HEK293 (cell line): ENCODE measurements at regions of chr5 and their contacts with region 1.

Region 1: DNA sequence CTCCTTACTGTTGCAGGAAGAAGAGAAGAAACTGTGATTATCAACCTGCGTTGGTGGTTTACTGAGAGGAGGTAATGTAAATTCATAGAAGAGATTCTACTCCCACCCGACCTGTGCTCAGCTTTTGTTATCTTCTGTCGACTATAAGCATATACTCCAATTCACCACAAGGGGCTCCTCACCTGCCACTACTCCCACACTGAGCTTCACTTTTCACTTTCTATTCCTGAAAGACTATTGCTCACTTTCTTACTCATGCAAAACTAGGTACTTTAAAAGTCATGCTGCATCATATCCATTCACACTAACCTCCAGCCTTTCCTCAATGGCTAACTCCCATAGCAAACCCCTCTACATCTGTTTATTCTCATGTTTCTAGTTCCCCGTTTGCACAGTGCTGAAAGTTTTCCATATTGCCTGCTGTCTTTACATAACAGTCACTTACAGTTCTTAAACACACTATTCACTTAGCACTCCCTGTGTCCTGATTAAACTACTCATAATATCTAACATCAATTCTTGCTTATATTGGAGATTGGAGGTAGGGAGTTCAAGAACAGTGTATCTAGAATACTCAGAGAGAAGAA is 1062.6 kb downstream of the NR2F1-AS1 start:
- H3K4me3 ChIP-seq: no peak overlapping the region
- H3K27ac ChIP-seq: no peak overlapping the region; the same call in 1 of the 2 replicates
- H3K4me1 ChIP-seq: peaks cover 10% of the 10 kb centered on the region
- CTCF ChIP-seq: no peak; the same call in 1 of the 2 replicates

Region 2: DNA sequence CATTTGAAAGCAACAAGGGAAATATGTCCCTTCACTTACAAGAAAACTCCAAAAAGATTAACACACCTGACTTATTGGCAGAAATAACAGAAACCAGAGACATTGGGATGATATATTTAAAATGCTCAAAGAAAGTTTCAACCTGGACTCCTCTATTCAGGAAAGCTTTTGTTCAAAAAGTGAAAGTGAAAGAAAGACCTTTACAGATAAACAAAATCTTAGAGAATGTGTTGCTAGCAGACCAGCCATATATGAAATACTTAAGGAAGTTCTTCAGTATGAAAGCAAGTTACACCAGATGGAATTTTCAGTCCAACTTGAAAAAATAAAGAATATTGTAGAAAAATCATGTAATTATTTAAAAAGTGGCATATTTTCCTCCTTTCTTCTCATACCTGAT is 12.5 kb before region 1 on chr5:
- CTCF ChIA-PET with region 1: interaction called, 13 read pairs
- POLR2A ChIA-PET with region 1: no interaction called
- H3K4me3 ChIP-seq: no peak overlapping the region
- H3K27ac ChIP-seq: no peak overlapping the region
- H3K4me1 ChIP-seq: no peaks in the 10 kb centered on the region
- CTCF ChIP-seq: no peak